Naive thymus-derived CD4-positive, alpha-beta T cell (primary cell): ENCODE measurements at regions of chr5 and their contacts with region 1.

Region 1: GRCh38 chr5:134225618-134226440 is at the start of gene PPP2CA:
- DNase-seq: peak; percentile 98 to 100 (median 99)
- ATAC-seq: peak; percentile 89
- H3K4me3 ChIP-seq: peak within 1 kb of the TSS; percentile 100
- H3K4me3 Mint-ChIP-seq: peak within 1 kb of the TSS; percentile 66 to 98 (median 96)
- H3K27ac ChIP-seq: peak within 1 kb of the TSS; percentile 100
- H3K27ac Mint-ChIP-seq: peak within 1 kb of the TSS; percentile 95 to 100 (median 98)
- H3K4me1 ChIP-seq: peaks cover 29 to 40% of the 10 kb centered on the region in 2 donors
- H3K4me1 Mint-ChIP-seq: peaks cover 37 to 58% (median 52%) of the 10 kb centered on the region in 7 donors
- H3K27me3 ChIP-seq: no peaks in the 10 kb centered on the region
- H3K27me3 Mint-ChIP-seq: peaks cover 0 to 4% (median 0%) of the 10 kb centered on the region in 5 donors
- total RNA-seq, gene PPP2CA: 89.5 to 168 (median 132) TPM

Region 2: GRCh38 chr5:133251275-133252132 is 974.3 kb before region 1 on chr5:
- CTCF ChIA-PET with region 1: no interaction called
- POLR2A ChIA-PET with region 1: no interaction called
- intact Hi-C with region 1: no loop called
- DNase-seq: no peak
- ATAC-seq: no peak
- H3K4me3 ChIP-seq: no peak overlapping the region
- H3K4me3 Mint-ChIP-seq: no peak overlapping the region
- H3K27ac ChIP-seq: no peak overlapping the region
- H3K27ac Mint-ChIP-seq: no peak overlapping the region
- H3K4me1 ChIP-seq: no peaks in the 10 kb centered on the region
- H3K4me1 Mint-ChIP-seq: peaks cover 0 to 10% (median 0%) of the 10 kb centered on the region in 7 donors
- H3K27me3 ChIP-seq: no peaks in the 10 kb centered on the region
- H3K27me3 Mint-ChIP-seq: peaks cover 0 to 2% (median 0%) of the 10 kb centered on the region in 5 donors

Region 3: GRCh38 chr5:133968049-133968980 is 257.5 kb before region 1 on chr5 and contains the start of gene C5orf15:
- CTCF ChIA-PET with region 1: no interaction called
- POLR2A ChIA-PET with region 1: no interaction called
- intact Hi-C with region 1: loop called (anchors 1 kb)
- DNase-seq: peak; percentile 72 to 93 (median 87)
- ATAC-seq: peak; percentile 98
- H3K4me3 ChIP-seq: peak within 1 kb of the TSS; percentile 90
- H3K4me3 Mint-ChIP-seq: peak within 1 kb of the TSS; percentile 93 to 100 (median 98)
- H3K27ac ChIP-seq: peak within 1 kb of the TSS; percentile 94
- H3K27ac Mint-ChIP-seq: peak within 1 kb of the TSS; percentile 92 to 99 (median 97)
- H3K4me1 ChIP-seq: peaks cover 10 to 16% of the 10 kb centered on the region in 2 donors
- H3K4me1 Mint-ChIP-seq: peaks cover 21 to 63% (median 52%) of the 10 kb centered on the region in 7 donors
- H3K27me3 ChIP-seq: no peaks in the 10 kb centered on the region
- H3K27me3 Mint-ChIP-seq: no peaks in the 10 kb centered on the region
- total RNA-seq, gene C5orf15: 11.1 to 33.6 (median 17.9) TPM

Region 4: GRCh38 chr5:134145779-134146581 is 79.8 kb before region 1 on chr5:
- CTCF ChIA-PET with region 1: interaction called, 5 read pairs
- POLR2A ChIA-PET with region 1: interaction called, 19 read pairs
- intact Hi-C with region 1: no loop called
- DNase-seq: peak; percentile 64 to 87 (median 77)
- ATAC-seq: peak; percentile 84
- H3K4me3 ChIP-seq: no peak overlapping the region
- H3K4me3 Mint-ChIP-seq: peak overlapping the region in 4 of 10 donors; percentile 18 to 54 (median 27)
- H3K27ac ChIP-seq: peak overlapping the region; percentile 63
- H3K27ac Mint-ChIP-seq: peak overlapping the region in 8 of 9 donors; percentile 75 to 93 (median 90)
- H3K4me1 ChIP-seq: peaks cover 5 to 29% of the 10 kb centered on the region in 2 donors
- H3K4me1 Mint-ChIP-seq: peaks cover 21 to 67% (median 46%) of the 10 kb centered on the region in 7 donors
- H3K27me3 ChIP-seq: no peaks in the 10 kb centered on the region
- H3K27me3 Mint-ChIP-seq: no peaks in the 10 kb centered on the region

Region 5: GRCh38 chr5:134289509-134290113 is 63.8 kb after region 1 on chr5:
- CTCF ChIA-PET with region 1: interaction called, 4 read pairs
- POLR2A ChIA-PET with region 1: interaction called, 4 read pairs
- intact Hi-C with region 1: loop called in 1 of 2 experiments (anchors 1 kb)
- DNase-seq: peak in 7 of 9 donors; percentile 13 to 61 (median 50)
- ATAC-seq: peak; percentile 91
- H3K4me3 ChIP-seq: no peak overlapping the region
- H3K4me3 Mint-ChIP-seq: no peak overlapping the region
- H3K27ac ChIP-seq: no peak overlapping the region
- H3K27ac Mint-ChIP-seq: no peak overlapping the region
- H3K4me1 ChIP-seq: no peaks in the 10 kb centered on the region
- H3K4me1 Mint-ChIP-seq: peaks cover 0 to 6% (median 0%) of the 10 kb centered on the region in 7 donors
- H3K27me3 ChIP-seq: no peaks in the 10 kb centered on the region
- H3K27me3 Mint-ChIP-seq: peaks cover 0 to 39% (median 3%) of the 10 kb centered on the region in 5 donors

Region 6: GRCh38 chr5:134609232-134609851 is 383.5 kb after region 1 on chr5:
- CTCF ChIA-PET with region 1: no interaction called
- POLR2A ChIA-PET with region 1: no interaction called
- intact Hi-C with region 1: loop called in 1 of 2 experiments (anchors 10 kb)
- DNase-seq: no peak
- ATAC-seq: no peak
- H3K4me3 ChIP-seq: no peak overlapping the region
- H3K4me3 Mint-ChIP-seq: peak overlapping the region in 1 of 10 donors; percentile 70
- H3K27ac ChIP-seq: no peak overlapping the region
- H3K27ac Mint-ChIP-seq: peak overlapping the region in 8 of 9 donors; percentile 11 to 94 (median 50)
- H3K4me1 ChIP-seq: no peaks in the 10 kb centered on the region
- H3K4me1 Mint-ChIP-seq: peaks cover 0 to 39% (median 8%) of the 10 kb centered on the region in 7 donors
- H3K27me3 ChIP-seq: no peaks in the 10 kb centered on the region
- H3K27me3 Mint-ChIP-seq: no peaks in the 10 kb centered on the region

Region 7: GRCh38 chr5:134738133-134738962 is 512.5 kb after region 1 on chr5 and contains the start of gene CAMLG:
- CTCF ChIA-PET with region 1: interaction called, 3 read pairs
- POLR2A ChIA-PET with region 1: interaction called, 5 read pairs
- intact Hi-C with region 1: loop called (anchors 1 kb)
- DNase-seq: peak; percentile 93 to 96 (median 96)
- ATAC-seq: peak; percentile 98
- H3K4me3 ChIP-seq: peak within 1 kb of the TSS; percentile 91
- H3K4me3 Mint-ChIP-seq: peak within 1 kb of the TSS; percentile 88 to 100 (median 96)
- H3K27ac ChIP-seq: peak within 1 kb of the TSS; percentile 93
- H3K27ac Mint-ChIP-seq: peak within 1 kb of the TSS; percentile 90 to 98 (median 93)
- H3K4me1 ChIP-seq: peaks cover 8 to 10% of the 10 kb centered on the region in 2 donors
- H3K4me1 Mint-ChIP-seq: peaks cover 9 to 34% (median 29%) of the 10 kb centered on the region in 7 donors
- H3K27me3 ChIP-seq: no peaks in the 10 kb centered on the region
- H3K27me3 Mint-ChIP-seq: no peaks in the 10 kb centered on the region
- total RNA-seq, gene CAMLG: 20.4 to 38.1 (median 31.8) TPM

Region 8: GRCh38 chr5:134904630-134905245 is 678.9 kb after region 1 on chr5 and contains the start of gene PCBD2:
- CTCF ChIA-PET with region 1: no interaction called
- POLR2A ChIA-PET with region 1: interaction called, 5 read pairs
- intact Hi-C with region 1: loop called (anchors 1 to 10 kb)
- DNase-seq: peak; percentile 83 to 96 (median 90)
- ATAC-seq: peak; percentile 94
- H3K4me3 ChIP-seq: peak within 1 kb of the TSS; percentile 71
- H3K4me3 Mint-ChIP-seq: peak within 1 kb of the TSS; percentile 90 to 99 (median 96)
- H3K27ac ChIP-seq: peak within 1 kb of the TSS; percentile 90
- H3K27ac Mint-ChIP-seq: peak within 1 kb of the TSS; percentile 93 to 100 (median 99)
- H3K4me1 ChIP-seq: no peaks in the 10 kb centered on the region
- H3K4me1 Mint-ChIP-seq: peaks cover 0 to 25% (median 5%) of the 10 kb centered on the region in 7 donors
- H3K27me3 ChIP-seq: no peaks in the 10 kb centered on the region
- H3K27me3 Mint-ChIP-seq: no peaks in the 10 kb centered on the region
- total RNA-seq, gene PCBD2: 10.6 to 15.8 (median 14.3) TPM